ENCODE measurements at regions of chr3 and their contacts with region 1.

Region 1: DNA sequence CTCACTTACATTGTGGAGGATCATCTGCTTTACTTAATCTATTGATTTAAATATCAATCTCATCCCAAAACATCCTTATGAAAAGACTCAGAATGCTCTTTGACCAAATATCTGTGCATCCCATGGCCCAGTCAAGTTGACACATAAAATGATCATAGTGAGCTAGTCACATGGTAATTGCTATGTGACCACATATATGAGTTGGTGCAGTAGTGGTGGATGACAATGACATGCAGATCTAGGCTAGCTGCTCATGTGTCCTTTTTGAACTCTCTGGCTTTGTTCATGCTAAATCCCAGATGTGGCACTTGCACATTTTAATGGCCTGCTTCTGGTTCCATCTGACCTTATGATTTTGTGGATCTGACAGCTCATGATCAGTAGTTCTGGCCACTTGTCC is 156.2 kb downstream of the NFKBIZ start:
- DNase-seq: no peak
- H3K4me3 ChIP-seq: no peak overlapping the region
- H3K27ac ChIP-seq: no peak overlapping the region
- H3K4me1 ChIP-seq: no peaks in the 10 kb centered on the region
- CTCF ChIP-seq: no peak

Region 2: DNA sequence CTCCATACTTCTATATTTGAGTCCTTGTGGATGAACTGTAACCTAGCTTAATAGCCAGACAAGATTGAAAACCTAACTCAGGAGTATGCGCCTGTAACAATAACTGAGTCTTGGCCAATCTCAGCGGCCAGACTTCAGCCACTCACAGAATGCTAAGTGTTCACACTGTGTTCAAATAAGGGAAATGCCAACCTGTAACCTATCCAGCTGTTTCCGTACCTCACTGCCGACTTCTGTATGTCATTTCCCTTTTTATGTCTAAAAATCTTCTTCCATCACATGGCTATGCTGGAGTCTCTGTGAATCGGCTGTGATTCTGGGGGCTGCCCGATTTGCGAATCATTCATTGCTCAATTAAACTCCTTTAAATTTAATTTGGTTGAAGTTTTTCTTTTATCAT is 13.0 kb after region 1 on chr3:
- CTCF ChIA-PET with region 1: no interaction called
- POLR2A ChIA-PET with region 1: interaction called, 12 read pairs
- intact Hi-C with region 1: no loop called
- DNase-seq: no peak
- H3K4me3 ChIP-seq: no peak overlapping the region
- H3K27ac ChIP-seq: no peak overlapping the region
- H3K4me1 ChIP-seq: no peaks in the 10 kb centered on the region
- CTCF ChIP-seq: no peak